A549 (cell line): ENCODE measurements at regions of chr3 and their contacts with region 1.

Region 1: GRCh38 chr3:183477801-183478456 is 49.5 kb upstream of the MCF2L2 start:
- DNase-seq: no peak
- ATAC-seq: no peak
- H3K4me3 ChIP-seq: no peak overlapping the region
- H3K27ac ChIP-seq: no peak overlapping the region
- H3K4me1 ChIP-seq: no peaks in the 10 kb centered on the region
- CTCF ChIP-seq: no peak
- EP300 ChIP-seq: no peak
- POLR2A ChIP-seq: no peak
- RAD21 ChIP-seq: no peak

Region 2: DNA sequence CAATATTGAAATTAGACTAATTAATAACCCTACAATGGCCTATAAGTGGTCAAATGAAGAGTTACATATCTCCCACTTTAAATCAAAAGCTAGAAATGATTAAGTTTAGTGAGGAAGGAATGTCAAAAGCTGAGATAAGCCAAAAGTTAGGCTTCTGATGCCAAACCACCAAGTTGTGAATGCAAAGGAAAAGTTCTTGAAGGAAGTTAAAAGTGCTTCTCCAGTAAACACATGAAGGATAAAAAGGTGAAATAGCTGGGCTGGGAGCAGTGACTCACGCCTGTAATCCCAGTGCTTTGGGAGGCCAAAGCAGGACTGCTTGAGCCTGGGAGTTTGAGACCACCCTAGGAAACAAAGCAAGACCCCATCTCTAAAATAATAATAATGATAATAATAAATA is 450.7 kb before region 1 on chr3:
- CTCF ChIA-PET with region 1: no interaction called
- POLR2A ChIA-PET with region 1: no interaction called
- DNase-seq: no peak
- ATAC-seq: no peak
- H3K4me3 ChIP-seq: no peak overlapping the region
- H3K27ac ChIP-seq: no peak overlapping the region
- H3K4me1 ChIP-seq: no peaks in the 10 kb centered on the region
- CTCF ChIP-seq: no peak
- EP300 ChIP-seq: no peak
- POLR2A ChIP-seq: no peak
- RAD21 ChIP-seq: no peak

Region 3: DNA sequence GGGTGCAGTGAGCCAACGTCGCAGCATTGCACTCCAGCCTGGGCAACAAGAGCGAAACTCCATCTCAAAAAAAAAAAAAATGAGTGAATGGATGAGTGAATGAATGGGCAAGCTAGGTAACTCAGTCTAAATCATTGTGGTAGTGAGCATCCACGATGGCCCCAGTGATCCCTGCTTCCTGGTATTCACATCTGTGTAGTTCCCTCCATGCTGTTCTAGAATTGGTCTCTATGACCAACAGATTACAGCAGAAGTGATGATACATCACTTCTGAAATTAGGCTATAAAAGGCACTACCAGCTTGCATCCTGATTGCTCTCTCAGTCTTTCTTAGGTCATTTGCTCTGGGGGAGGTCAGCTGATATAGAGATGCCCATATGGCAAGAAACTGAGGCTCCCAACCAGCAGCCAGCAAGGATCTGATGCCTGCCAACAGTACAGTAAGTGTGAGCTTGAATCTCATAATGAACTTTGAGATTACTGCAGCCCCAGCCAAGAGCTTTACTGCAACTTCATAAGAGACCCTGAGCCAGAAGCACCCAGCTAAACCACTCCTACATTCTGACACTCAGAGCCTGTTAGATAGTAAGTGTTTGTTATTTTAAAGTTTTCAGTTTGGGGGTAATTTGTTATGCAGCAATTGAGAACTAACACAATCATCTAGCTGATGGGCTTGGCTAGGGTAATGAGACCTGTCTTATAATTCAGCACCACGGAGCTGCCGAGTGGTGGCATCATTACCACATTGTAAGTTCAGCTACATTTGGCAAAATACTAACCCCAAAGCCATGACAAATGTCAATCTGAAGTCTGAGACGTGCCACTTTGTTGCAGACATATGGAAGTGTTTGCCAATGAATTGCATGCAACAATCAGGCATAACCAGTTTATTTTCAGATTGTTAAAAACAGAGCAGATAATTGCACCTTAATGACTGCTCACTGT is 24.6 kb after region 1 on chr3:
- CTCF ChIA-PET with region 1: interaction called, 11 read pairs
- POLR2A ChIA-PET with region 1: no interaction called
- DNase-seq: peak in 1 of 2 experiments; percentile 14
- ATAC-seq: peak; percentile 66 to 73; a peak in 5 of 6 replicates
- H3K4me3 ChIP-seq: no peak overlapping the region
- H3K27ac ChIP-seq: no peak overlapping the region
- H3K4me1 ChIP-seq: no peaks in the 10 kb centered on the region
- CTCF ChIP-seq: peak; percentile 38; the same call in 2 of the 3 replicates
- EP300 ChIP-seq: no peak
- POLR2A ChIP-seq: no peak
- RAD21 ChIP-seq: peak; percentile 56 to 61